MCF 10A (cell line): ENCODE measurements at regions of chr13 and their contacts with region 1.

Region 1: GRCh38 chr13:94317063-94317491 is 162.4 kb downstream of the DCT start:
- DNase-seq: no peak
- H3K4me3 Mint-ChIP-seq: no peak overlapping the region
- H3K27ac Mint-ChIP-seq: no peak overlapping the region
- H3K4me1 Mint-ChIP-seq: peaks cover 6% of the 10 kb centered on the region
- H3K27me3 Mint-ChIP-seq: no peaks in the 10 kb centered on the region
- CTCF ChIP-seq: no peak

Region 2: DNA sequence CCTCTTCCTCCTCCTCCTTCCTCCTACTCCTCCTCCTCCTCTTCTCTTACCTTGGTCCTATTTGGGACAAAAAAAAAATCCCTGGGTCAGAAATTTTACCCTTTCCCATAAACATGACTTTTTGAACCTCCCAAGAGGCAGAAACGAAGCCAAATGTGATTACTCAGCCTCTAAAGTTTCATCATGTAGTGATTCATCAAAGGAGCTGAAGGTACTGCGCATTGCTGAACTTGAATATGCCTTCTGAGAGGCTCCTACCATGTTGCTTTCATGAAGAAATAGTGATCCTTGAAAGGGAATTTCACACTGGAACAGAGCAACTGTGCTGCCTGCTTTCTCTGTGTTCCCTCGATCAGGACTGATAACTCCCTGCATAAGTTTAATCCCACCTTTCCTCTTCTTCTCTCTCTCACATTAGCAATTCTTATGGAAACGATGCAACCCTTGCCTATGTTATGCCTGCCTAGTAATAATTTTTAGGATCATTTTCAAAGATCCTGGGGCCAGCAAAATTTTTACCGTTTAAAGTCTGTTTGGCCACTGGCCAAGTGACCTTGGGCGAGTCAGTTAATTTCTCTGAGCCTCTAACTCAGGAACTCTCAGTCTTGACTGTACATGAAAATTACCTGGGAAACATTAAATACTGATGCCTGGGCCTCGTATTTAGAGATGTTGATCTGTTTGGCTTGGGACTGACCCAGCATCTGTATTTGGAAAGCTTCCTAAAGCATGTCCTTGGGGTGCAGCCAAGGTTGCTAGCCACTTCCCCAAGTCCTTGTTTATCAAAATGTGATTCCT is 12.9 kb after region 1 on chr13:
- CTCF ChIA-PET with region 1: interaction called, 4 read pairs
- POLR2A ChIA-PET with region 1: interaction called, 13 read pairs
- intact Hi-C with region 1: no loop called
- DNase-seq: peak; percentile 96
- H3K4me3 Mint-ChIP-seq: peak overlapping the region; percentile 21
- H3K27ac Mint-ChIP-seq: peak overlapping the region; percentile 90
- H3K4me1 Mint-ChIP-seq: peaks cover 18% of the 10 kb centered on the region
- H3K27me3 Mint-ChIP-seq: no peaks in the 10 kb centered on the region
- CTCF ChIP-seq: no peak

Region 3: GRCh38 chr13:94362411-94362909 is 45.4 kb after region 1 on chr13:
- CTCF ChIA-PET with region 1: no interaction called
- POLR2A ChIA-PET with region 1: no interaction called
- intact Hi-C with region 1: no loop called
- DNase-seq: peak; percentile 87
- H3K4me3 Mint-ChIP-seq: no peak overlapping the region
- H3K27ac Mint-ChIP-seq: no peak overlapping the region
- H3K4me1 Mint-ChIP-seq: no peaks in the 10 kb centered on the region
- H3K27me3 Mint-ChIP-seq: no peaks in the 10 kb centered on the region
- CTCF ChIP-seq: peak; percentile 61

Region 4: DNA sequence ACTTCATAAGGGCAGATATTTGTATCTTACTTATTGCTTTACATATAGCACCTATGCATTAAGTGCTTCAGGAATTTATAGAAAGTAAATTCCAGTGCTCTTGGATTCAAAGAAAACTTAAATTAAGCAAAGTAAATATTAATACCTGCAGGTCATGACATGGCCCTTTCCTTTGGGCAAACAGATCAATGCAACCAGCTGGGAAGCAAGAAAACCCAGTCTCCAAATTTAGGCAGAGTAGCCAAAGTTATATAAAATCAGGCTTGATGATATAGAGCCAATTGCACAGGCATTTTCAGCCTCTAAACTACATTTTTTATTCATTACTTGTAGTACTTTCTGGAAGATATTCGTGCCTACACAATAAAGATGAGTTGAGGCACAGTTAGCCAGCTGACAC is 262.0 kb after region 1 on chr13:
- CTCF ChIA-PET with region 1: no interaction called
- POLR2A ChIA-PET with region 1: no interaction called
- intact Hi-C with region 1: no loop called
- DNase-seq: no peak
- H3K4me3 Mint-ChIP-seq: no peak overlapping the region
- H3K27ac Mint-ChIP-seq: no peak overlapping the region
- H3K4me1 Mint-ChIP-seq: no peaks in the 10 kb centered on the region
- H3K27me3 Mint-ChIP-seq: no peaks in the 10 kb centered on the region
- CTCF ChIP-seq: no peak